ENCODE measurements at regions of chr6 and their contacts with region 1.

Region 1: GRCh38 chr6:125859741-125860140 is 69.0 kb downstream of the NCOA7 start:
- DNase-seq: no peak
- H3K4me3 ChIP-seq: no peak overlapping the region
- H3K27ac ChIP-seq: no peak overlapping the region
- H3K4me1 ChIP-seq: peaks cover 17% of the 10 kb centered on the region
- H3K27me3 ChIP-seq: no peaks in the 10 kb centered on the region
- CTCF ChIP-seq: no peak

Region 2: DNA sequence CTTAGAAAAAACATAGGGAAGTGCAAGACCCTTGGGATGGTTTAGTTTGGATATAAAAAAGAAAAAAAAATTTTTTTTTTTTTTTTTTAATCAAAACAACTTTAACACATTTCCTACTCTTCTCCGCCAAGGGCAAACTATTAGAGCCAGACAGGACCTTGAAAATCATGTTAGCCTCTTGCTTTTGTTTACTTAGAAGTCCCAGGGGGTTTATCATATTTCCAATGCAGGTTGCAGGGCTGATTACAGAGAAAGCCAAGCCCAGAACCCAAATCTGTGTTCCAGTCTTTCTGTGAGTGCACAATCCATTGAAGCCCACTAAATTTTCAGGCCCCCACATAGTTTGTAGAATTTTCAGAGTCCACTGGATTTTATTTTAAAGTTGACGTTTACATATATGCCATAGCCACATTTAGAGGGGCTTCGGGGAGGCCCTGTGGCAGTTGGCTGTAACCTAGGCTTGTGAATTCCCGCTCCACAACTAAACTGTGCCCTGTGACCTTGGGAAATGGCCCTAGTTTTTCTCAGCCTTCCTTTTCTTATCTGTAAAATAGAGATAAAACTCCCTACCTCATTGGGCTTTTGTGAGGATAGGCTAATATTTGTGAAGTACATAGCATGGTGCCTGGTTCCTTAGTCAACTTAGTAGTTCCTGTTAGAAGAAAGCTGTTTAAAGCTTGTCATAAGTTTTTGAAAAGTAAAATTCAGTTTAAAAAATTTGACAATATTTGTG is 13.3 kb before region 1 on chr6:
- CTCF ChIA-PET with region 1: no interaction called
- POLR2A ChIA-PET with region 1: no interaction called
- intact Hi-C with region 1: loop called (anchors 2 kb)
- DNase-seq: no peak
- H3K4me3 ChIP-seq: no peak overlapping the region
- H3K27ac ChIP-seq: no peak overlapping the region
- H3K4me1 ChIP-seq: no peaks in the 10 kb centered on the region
- H3K27me3 ChIP-seq: no peaks in the 10 kb centered on the region
- CTCF ChIP-seq: no peak

Measured in PC-9 (cell line).